Activated CD4-positive, alpha-beta T cell treated with anti-CD3 and anti-CD28 coated beads, Interleukin-2, amount 10 ng/mL, durations not matched to agents 24 days and 14 days (primary cell): ENCODE measurements at regions of chr13 and their contacts with region 1.

Region 1: DNA sequence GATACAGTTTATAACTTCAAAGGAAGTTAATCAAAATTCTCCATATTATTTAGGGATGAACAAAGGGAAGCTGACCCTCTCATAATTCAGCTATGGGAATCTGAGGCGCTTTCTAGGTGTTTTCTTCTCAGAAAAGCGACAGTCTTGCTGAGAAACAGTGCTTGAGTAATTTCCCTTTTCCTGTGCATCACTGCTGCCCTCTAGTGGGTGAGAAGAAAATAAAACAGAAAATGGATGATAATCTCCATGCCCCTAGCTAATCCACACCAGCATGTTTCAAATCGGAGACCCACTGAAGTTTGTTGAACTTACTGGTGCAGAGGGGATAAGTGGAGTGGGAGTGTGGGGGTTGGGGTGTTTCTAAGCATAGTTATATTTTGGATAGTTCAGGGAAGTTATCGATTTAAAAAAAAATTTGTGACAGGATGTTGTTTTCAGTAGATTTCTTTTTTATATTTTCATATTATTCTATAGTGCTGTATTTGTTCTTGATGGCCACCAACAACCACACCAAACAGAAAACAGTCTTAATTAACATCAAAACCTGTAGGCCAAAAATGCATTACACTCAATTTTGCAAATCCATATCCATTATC is 21.4 kb downstream of the LCP1 start:
- DNase-seq: peak; percentile 85
- H3K4me3 Mint-ChIP-seq: peak overlapping the region; percentile 76
- H3K27ac Mint-ChIP-seq: peak overlapping the region; percentile 83
- H3K4me1 Mint-ChIP-seq: peaks cover 48% of the 10 kb centered on the region
- H3K27me3 Mint-ChIP-seq: no peaks in the 10 kb centered on the region

Region 2: GRCh38 chr13:46288570-46289259 is 128.1 kb after region 1 on chr13:
- intact Hi-C with region 1: loop called (anchors 1 kb)
- DNase-seq: peak; percentile 80
- H3K4me3 Mint-ChIP-seq: no peak overlapping the region
- H3K27ac Mint-ChIP-seq: no peak overlapping the region
- H3K4me1 Mint-ChIP-seq: peaks cover 19% of the 10 kb centered on the region
- H3K27me3 Mint-ChIP-seq: no peaks in the 10 kb centered on the region